K562 (cell line): ENCODE measurements at regions of chr3 and their contacts with region 1.

Region 1: DNA sequence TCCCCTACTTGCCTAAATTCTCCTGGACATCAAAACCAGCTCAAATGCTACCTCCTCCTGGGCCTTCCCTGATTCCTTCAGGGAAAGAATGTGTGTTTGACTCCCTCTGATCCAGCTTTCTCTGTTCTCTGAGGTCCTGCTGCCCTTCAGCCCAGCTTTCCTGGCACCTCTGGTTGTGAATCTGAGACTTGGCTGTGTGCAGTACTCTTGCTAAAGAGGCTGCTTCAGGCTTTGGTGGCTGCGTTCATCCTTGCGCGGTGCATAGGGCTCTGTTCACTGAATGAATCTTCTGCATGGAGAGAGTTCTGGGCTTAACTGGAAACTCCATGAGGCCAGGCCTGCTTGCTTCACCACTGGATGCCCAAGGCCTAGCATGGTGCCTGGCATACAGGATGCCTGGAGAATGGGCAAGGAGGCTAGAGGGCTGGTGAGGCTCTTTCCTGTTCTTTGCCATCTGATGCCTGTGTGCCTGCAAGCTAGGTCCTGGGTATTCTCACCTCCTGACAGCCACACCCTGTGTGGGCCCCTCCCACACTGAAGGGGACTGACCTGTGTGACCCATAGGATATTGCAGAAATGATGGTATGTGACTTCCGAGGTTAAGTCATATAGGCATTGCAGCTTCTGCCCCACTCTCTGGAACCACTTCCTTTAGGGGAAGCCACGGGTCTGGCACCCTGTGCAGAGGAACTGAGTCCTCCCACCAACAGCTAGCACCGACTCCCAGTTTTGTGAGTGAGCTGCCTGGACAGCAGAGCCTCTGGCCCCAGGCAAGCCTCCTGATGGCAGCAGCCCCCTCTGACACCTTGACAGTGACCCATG is 24.8 kb upstream of the SLC6A6 start:
- DNase-seq: no peak
- ATAC-seq: no peak
- H3K4me3 ChIP-seq: no peak overlapping the region
- H3K27ac ChIP-seq: no peak overlapping the region
- H3K4me1 ChIP-seq: peaks cover 23 to 41% of the 10 kb centered on the region in 2 experiments
- H3K27me3 ChIP-seq: no peaks in the 10 kb centered on the region
- CTCF ChIP-seq: no peak
- EP300 ChIP-seq: no peak
- POLR2A ChIP-seq: no peak
- RAD21 ChIP-seq: no peak

Region 2: DNA sequence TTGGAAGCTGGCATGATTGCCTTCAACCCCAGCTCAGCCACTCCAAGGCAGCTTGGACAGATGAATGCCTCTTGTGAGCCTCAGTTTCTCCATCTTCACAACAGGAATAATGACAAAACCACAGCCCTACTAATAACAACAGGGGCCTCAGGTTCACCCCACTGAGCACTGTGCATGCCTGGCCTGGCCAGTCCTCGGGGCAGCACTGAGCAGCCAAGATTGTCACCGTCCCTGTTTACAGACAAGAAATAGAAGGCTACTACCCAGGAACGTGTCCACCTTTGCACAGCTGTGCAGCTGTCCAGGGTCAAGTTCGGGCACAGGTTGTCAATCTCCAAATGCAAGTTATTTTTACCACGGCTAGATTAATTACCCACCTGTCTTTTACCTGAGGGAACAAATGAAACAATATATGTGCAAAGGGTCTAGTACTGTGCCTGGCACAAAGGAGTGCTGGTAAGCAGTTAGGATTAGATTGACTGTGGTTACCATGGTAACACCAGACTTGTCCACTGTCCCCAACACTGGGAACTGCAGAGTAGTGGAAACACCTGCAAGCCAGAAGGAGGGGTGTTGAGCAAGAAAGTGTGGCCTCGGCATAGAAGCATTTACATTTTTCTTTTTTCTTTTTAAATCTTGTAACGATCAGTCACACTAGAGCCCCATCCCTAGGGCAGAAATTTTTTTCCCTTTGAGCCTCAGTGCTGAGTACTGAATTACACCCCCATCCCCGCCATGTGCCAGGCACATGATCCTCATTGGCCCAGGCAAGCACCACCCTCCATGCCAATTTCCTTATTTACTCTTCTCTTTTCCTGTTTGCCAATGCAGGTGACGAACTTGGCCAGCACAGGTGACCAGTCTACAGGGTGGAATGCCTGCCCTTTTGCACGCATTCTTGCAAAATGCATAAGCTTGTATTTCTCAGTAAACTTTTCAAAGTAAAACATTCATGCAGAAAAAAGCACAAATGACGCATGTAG is 41.5 kb before region 1 on chr3:
- CTCF ChIA-PET with region 1: no interaction called
- POLR2A ChIA-PET with region 1: no interaction called
- in situ Hi-C with region 1: no loop called
- intact Hi-C with region 1: no loop called
- DNase-seq: no peak
- ATAC-seq: no peak
- H3K4me3 ChIP-seq: no peak overlapping the region
- H3K27ac ChIP-seq: no peak overlapping the region
- H3K4me1 ChIP-seq: peaks cover 7 to 10% of the 10 kb centered on the region in 2 experiments; a peak in 3 of 5 replicates
- H3K27me3 ChIP-seq: no peaks in the 10 kb centered on the region
- CTCF ChIP-seq: no peak
- EP300 ChIP-seq: no peak
- POLR2A ChIP-seq: no peak
- RAD21 ChIP-seq: no peak

Region 3: GRCh38 chr3:14391033-14391432 is 13.5 kb after region 1 on chr3:
- CTCF ChIA-PET with region 1: no interaction called
- POLR2A ChIA-PET with region 1: interaction called, 11 read pairs
- in situ Hi-C with region 1: no loop called
- intact Hi-C with region 1: no loop called
- DNase-seq: peak in 2 of 4 experiments; percentile 40 to 56
- ATAC-seq: peak; percentile 60
- H3K4me3 ChIP-seq: no peak overlapping the region
- H3K27ac ChIP-seq: no peak overlapping the region; the same call in 2 of the 3 replicates
- H3K4me1 ChIP-seq: peaks cover 13 to 14% of the 10 kb centered on the region in 2 experiments
- H3K27me3 ChIP-seq: no peaks in the 10 kb centered on the region
- CTCF ChIP-seq: no peak
- EP300 ChIP-seq: peak; percentile 50
- POLR2A ChIP-seq: no peak
- RAD21 ChIP-seq: no peak